ENCODE measurements at regions of chr18 and their contacts with region 1.

Region 1: GRCh38 chr18:61738488-61738887 is 154.3 kb downstream of the RNF152 start:
- DNase-seq: no peak
- ATAC-seq: peak; percentile 26
- H3K4me3 ChIP-seq: no peak overlapping the region
- H3K4me1 ChIP-seq: peaks cover 29% of the 10 kb centered on the region
- CTCF ChIP-seq: no peak

Region 2: DNA sequence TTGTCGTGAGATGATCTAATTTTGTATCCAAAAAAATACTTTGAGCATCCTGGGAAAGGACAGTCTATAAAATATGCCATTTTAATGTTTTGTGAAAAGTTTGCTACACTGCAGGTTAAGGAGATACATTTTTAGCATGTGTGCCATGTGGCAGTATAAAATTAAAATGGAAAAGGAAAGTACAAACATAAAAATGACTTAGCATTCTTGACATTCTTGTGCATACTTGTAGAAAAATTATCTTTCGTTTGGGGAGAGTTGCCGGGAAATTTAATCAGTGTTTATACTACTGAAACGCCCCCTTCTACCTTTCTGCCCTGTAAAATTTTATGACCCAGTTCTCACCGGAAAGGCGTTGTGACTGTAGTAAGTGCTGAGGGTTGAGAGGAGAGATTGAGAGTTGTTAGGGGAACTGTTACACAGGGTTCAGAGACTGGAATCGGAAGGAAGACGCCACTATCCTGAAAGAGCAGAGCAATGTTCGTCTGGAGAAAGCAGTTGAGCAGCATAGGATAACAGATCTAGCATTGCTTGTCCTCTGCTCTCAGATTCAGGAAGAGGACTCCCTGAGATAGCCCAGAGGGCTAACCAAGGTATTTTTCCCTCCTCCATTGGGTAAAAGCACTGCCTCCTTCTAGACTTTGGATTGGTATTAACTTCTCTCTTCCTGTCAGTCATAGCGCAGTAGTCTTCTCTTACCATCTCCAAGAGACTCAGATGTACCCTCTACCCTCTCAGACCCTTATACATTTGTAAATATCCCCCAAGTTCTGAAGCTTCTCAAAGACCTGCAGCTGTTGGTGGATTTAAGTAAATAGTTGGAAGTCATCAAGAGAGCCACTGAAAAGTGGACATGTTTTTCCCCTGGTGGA is 402.6 kb before region 1 on chr18:
- intact Hi-C with region 1: no loop called
- DNase-seq: no peak
- ATAC-seq: peak; percentile 31
- H3K4me3 ChIP-seq: no peak overlapping the region
- H3K4me1 ChIP-seq: peaks cover 8% of the 10 kb centered on the region
- CTCF ChIP-seq: no peak

Region 3: GRCh38 chr18:61808286-61808685 is 69.8 kb after region 1 on chr18:
- intact Hi-C with region 1: no loop called
- DNase-seq: no peak
- ATAC-seq: no peak
- H3K4me3 ChIP-seq: no peak overlapping the region
- H3K4me1 ChIP-seq: no peaks in the 10 kb centered on the region
- CTCF ChIP-seq: no peak

Region 4: GRCh38 chr18:61893971-61894750 is 155.7 kb after region 1 on chr18:
- intact Hi-C with region 1: loop called in 1 of 2 experiments (anchors 10 kb)
- DNase-seq: peak; percentile 88 to 92 (median 88)
- ATAC-seq: peak; percentile 87
- H3K4me3 ChIP-seq: peak overlapping the region; percentile 78
- H3K4me1 ChIP-seq: peaks cover 15% of the 10 kb centered on the region
- CTCF ChIP-seq: peak; percentile 32

Region 5: GRCh38 chr18:62054929-62055498 is 316.5 kb after region 1 on chr18:
- intact Hi-C with region 1: no loop called
- DNase-seq: no peak
- ATAC-seq: peak; percentile 71
- H3K4me3 ChIP-seq: no peak overlapping the region
- H3K4me1 ChIP-seq: peaks cover 3% of the 10 kb centered on the region
- CTCF ChIP-seq: no peak

Region 6: GRCh38 chr18:63098018-63098981 is 1359.8 kb after region 1 on chr18:
- intact Hi-C with region 1: no loop called
- DNase-seq: peak in 2 of 3 donors; percentile 26 to 37
- ATAC-seq: no peak
- H3K4me3 ChIP-seq: no peak overlapping the region
- H3K4me1 ChIP-seq: peaks cover 6% of the 10 kb centered on the region
- CTCF ChIP-seq: no peak